ENCODE measurements at regions of chr19 and their contacts with region 1.

Region 1: GRCh38 chr19:6218491-6219162 is 61.1 kb downstream of the MLLT1 start:
- DNase-seq: peak; percentile 91 to 96
- ATAC-seq: peak; percentile 77 to 81 (median 79)
- H3K4me3 ChIP-seq: no peak overlapping the region
- H3K27ac ChIP-seq: peak overlapping the region; percentile 56
- H3K4me1 ChIP-seq: peaks cover 47% of the 10 kb centered on the region
- H3K27me3 ChIP-seq: no peaks in the 10 kb centered on the region
- CTCF ChIP-seq: peak; percentile 99

Region 2: DNA sequence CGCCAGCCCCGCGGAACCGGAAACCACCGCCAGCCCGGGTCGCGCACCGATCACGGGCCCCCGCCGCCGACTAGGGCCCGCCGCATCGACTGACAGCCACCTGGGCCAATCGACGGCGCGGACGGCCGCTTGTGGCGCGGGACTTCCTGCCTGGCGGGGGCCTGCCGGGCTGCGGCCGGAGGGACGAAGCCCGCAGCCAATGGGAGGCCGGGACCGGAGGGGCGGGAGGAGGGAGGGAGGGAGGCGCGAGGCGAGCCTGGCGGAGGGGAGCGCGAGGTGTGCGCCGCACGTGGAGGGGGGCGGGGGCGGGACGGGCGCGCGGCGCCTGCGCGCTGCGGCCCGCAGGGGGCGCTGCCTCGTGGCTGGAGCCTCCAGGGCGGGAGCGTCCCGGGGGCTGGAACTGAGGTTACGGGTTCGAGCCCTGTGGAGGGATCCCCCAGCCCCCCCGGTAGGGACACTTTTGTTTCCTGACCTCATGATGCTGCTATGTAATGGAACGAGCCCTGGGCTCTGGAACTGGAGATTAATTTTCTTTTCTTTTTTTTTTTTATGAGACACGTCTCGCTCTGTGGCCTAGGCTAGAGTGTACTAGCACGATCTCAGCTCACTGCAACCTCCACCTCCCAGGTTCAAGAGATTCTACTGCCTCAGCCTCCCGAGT is 61.4 kb after region 1 on chr19 and contains the start of gene MLLT1:
- intact Hi-C with region 1: loop called (anchors 2 to 10 kb)
- DNase-seq: peak; percentile 98 to 99
- ATAC-seq: peak; percentile 97 to 98 (median 97)
- H3K4me3 ChIP-seq: peak within 1 kb of the TSS; percentile 93
- H3K27ac ChIP-seq: peak within 1 kb of the TSS; percentile 86
- H3K4me1 ChIP-seq: peaks cover 35% of the 10 kb centered on the region
- H3K27me3 ChIP-seq: no peaks in the 10 kb centered on the region
- CTCF ChIP-seq: peak; percentile 80
- total RNA-seq, gene MLLT1: 35.8 to 51.7 (median 44.0) TPM

Region 3: GRCh38 chr19:6297202-6297601 is 78.6 kb after region 1 on chr19:
- intact Hi-C with region 1: loop called (anchors 1 kb)
- DNase-seq: no peak
- ATAC-seq: no peak
- H3K4me3 ChIP-seq: no peak overlapping the region
- H3K27ac ChIP-seq: no peak overlapping the region
- H3K4me1 ChIP-seq: no peaks in the 10 kb centered on the region
- H3K27me3 ChIP-seq: peaks cover 0 to 4% (median 0%) of the 10 kb centered on the region in 3 donors
- CTCF ChIP-seq: no peak

Region 4: DNA sequence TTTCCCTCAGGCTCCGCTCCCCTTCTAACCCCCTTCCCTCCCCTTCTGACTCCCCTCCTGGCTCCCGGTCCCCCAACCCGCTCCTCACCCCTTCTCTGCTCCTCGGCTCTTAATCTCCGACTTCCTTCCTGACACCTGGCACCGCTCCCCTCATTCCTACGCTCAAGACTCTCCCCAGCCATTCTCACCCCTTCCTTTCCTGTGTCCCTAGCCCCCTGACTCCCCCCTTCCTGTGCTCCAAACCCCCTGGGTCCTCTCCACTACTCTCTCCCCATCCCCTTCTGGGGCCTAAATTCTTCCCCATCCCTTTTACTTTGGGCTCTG is 143.4 kb after region 1 on chr19:
- intact Hi-C with region 1: loop called in 1 of 2 experiments (anchors 5 kb)
- DNase-seq: no peak
- ATAC-seq: peak in 1 of 4 donors; percentile 23
- H3K4me3 ChIP-seq: peak overlapping the region; percentile 95
- H3K27ac ChIP-seq: peak overlapping the region; percentile 85
- H3K4me1 ChIP-seq: peaks cover 6% of the 10 kb centered on the region
- H3K27me3 ChIP-seq: no peaks in the 10 kb centered on the region
- CTCF ChIP-seq: no peak

Region 5: GRCh38 chr19:6424939-6425731 is 206.5 kb after region 1 on chr19:
- intact Hi-C with region 1: loop called in 1 of 2 experiments (anchors 10 kb)
- DNase-seq: peak; percentile 94 to 100
- ATAC-seq: peak; percentile 93 to 95 (median 94)
- H3K4me3 ChIP-seq: peak overlapping the region; percentile 93
- H3K27ac ChIP-seq: peak overlapping the region; percentile 86
- H3K4me1 ChIP-seq: peaks cover 16% of the 10 kb centered on the region
- H3K27me3 ChIP-seq: peaks cover 0 to 4% (median 0%) of the 10 kb centered on the region in 3 donors
- CTCF ChIP-seq: no peak